ENCODE measurements at regions of chr19 and their contacts with region 1.

Region 1: GRCh38 chr19:18281082-18282020 is at the start of gene JUND:
- DNase-seq: peak; percentile 97
- H3K4me3 Mint-ChIP-seq: peak within 1 kb of the TSS; percentile 86
- H3K27ac Mint-ChIP-seq: peak within 1 kb of the TSS; percentile 98
- H3K4me1 Mint-ChIP-seq: peaks cover 50% of the 10 kb centered on the region
- H3K27me3 Mint-ChIP-seq: no peaks in the 10 kb centered on the region
- total RNA-seq, gene JUND: 343 to 347 TPM

Region 2: GRCh38 chr19:18251587-18252369 is 29.6 kb before region 1 on chr19:
- CTCF ChIA-PET with region 1: interaction called, 10 read pairs
- POLR2A ChIA-PET with region 1: no interaction called
- DNase-seq: peak; percentile 80
- H3K4me3 Mint-ChIP-seq: no peak overlapping the region
- H3K27ac Mint-ChIP-seq: no peak overlapping the region
- H3K4me1 Mint-ChIP-seq: peaks cover 2% of the 10 kb centered on the region
- H3K27me3 Mint-ChIP-seq: peaks cover 24% of the 10 kb centered on the region

Region 3: DNA sequence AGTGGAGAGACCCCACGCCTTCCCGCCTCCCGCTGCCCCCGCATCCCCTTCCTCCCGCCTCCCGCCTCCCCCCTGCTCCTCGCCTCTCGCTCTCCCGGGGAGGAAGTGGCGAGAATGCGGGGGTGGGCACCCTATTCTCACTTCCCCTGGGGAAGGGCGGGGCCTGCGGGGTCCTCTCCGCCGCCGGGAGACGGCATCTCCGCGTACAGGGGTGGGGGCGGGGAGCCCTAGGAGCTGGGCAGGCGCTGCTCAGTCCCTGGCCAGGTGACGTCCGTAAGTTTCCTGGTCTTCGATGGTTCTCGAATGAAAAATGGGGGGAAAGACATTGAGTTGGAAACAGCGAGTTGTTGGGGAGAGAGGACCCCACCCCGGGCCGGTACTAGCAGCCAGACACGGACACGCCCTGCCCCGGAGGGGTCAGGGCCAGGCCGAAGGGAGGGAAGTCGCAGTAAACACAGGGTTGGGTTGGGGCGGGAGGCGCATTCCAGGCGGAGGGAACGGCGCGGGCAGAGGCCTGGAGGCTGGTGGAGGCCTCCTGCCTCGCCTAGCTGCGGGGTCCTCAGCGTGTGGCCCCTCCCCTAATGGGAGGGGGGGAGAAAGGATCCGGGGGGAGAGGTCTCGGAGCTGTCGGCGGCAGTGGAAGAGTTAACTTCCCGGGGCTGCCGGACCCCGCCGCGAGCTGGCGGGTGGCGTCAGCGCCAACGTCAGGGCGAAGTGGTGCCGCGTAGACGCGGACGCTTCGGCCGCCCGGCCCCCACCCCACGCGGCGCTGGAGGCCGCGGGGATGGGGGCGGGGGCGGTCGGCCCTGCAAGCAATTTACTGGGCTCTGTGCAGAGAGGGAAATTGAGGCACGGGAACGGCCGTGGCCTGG is 10.5 kb after region 1 on chr19:
- CTCF ChIA-PET with region 1: interaction called, 69 read pairs
- POLR2A ChIA-PET with region 1: interaction called, 92 read pairs
- DNase-seq: peak; percentile 84
- H3K4me3 Mint-ChIP-seq: peak overlapping the region; percentile 93
- H3K27ac Mint-ChIP-seq: peak overlapping the region; percentile 96
- H3K4me1 Mint-ChIP-seq: peaks cover 76% of the 10 kb centered on the region
- H3K27me3 Mint-ChIP-seq: no peaks in the 10 kb centered on the region

Region 4: DNA sequence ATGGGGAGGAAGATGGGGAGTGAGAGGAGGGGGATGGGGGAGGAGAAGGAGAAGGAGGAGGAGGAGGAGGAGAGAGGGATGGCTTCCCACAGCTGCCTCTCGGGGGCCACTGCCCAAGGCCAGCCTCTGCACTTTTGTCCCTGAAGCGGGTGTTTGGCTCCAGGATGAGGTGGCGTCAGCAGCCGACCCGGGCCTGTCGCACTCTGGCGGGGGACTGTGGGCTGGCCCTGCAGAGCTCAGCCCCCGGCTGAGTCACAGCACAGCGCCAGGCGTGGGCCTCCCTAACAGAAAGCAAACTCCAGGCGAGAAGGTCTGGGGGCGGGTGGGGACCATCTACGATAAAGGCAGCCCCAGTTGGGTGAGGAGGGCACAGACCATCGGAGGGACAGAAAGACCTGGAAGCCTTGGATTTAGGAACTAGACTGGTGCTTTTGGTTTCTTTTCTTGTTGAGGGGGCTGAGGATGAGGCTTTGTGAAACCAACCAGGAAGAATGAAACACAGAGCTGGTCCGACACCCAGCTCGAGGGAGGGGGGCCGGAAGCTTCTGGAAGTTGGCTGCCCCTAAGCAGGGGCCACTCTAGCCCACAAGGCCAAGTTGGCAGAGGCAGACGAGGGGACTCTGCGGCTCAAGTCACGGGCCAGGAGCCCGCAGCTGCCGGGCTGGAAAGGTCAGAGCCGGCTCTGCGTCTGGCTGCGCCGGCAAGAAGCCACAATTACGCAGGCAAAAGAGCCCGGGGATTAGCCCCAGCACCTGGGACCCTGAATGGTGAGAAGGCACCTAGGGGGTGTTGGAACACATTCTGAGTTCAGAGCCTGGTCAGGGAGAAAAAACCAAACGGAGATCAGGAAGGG is 23.3 kb after region 1 on chr19:
- CTCF ChIA-PET with region 1: interaction called, 229 read pairs
- POLR2A ChIA-PET with region 1: interaction called, 128 read pairs
- DNase-seq: peak; percentile 81
- H3K4me3 Mint-ChIP-seq: peak overlapping the region; percentile 98
- H3K27ac Mint-ChIP-seq: peak overlapping the region; percentile 93
- H3K4me1 Mint-ChIP-seq: peaks cover 45% of the 10 kb centered on the region
- H3K27me3 Mint-ChIP-seq: no peaks in the 10 kb centered on the region

Region 5: DNA sequence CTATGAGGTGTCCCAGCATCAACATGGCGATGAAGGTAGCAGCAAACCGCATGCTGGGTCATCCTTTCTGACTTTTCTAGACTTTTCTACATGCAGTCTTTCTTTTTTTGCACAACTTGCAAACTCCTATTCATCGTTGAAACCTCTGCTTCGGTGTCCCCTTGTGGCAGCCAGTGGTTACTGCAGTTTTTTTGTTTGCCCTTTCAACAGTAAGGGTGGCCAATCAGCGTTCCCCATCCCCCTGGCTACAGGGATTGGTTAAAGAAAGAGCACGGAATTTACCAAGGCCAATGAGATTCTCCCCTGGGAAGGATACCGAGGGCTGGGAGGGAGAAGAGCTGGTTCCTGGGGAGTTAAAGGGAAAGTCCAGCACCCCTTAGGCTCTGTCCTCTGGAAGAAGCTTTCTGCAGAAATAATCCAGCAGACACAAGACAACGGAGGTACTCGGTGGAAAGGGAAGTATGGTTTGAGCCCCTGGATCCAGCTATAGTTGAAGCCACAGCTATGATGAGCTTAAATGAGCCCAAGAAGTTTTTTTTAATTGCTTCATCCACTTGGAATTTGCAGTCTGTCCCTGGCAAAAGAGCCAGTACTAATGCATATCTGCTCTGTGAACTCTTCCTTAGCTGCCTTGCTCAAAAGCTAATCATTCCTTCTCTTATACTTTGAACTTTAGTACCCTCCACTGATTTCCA is 47.1 kb after region 1 on chr19:
- CTCF ChIA-PET with region 1: interaction called, 162 read pairs
- POLR2A ChIA-PET with region 1: interaction called, 28 read pairs
- DNase-seq: peak; percentile 94
- H3K4me3 Mint-ChIP-seq: peak overlapping the region; percentile 33
- H3K27ac Mint-ChIP-seq: peak overlapping the region; percentile 51
- H3K4me1 Mint-ChIP-seq: peaks cover 24% of the 10 kb centered on the region
- H3K27me3 Mint-ChIP-seq: no peaks in the 10 kb centered on the region

Region 6: DNA sequence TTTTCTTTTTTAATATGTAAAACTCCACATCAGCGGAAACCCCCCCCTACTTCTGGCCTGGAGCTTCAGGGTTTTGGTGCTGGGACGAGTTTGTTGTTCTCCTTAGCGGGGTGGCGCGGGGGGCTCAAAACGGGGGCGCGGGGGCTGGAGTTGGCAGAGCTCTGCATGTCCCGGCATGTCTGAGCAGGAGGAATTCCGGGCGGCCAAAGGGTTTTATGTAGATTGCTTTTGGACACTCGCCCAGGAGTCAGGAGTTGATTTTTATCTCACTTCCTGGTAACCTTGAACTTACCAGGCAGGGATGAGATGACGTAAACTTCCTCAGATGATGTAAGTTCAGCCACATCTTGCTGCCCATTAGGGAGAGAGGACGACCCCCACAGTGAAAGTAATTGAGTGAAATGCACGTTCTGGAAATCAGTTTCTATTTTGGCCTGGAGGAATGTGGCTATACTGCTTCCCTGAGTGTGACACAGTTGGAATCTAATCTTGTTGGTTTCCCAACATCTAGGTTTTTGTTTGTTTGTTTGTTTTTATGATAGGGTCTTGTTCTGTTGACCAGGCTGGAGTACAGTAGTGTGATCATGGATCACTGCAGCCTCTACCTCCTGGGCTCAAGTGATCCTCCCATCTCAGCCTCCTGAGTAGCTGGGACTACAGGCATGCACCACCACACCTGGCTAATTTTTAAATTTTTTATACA is 83.6 kb after region 1 on chr19:
- CTCF ChIA-PET with region 1: interaction called, 16 read pairs
- POLR2A ChIA-PET with region 1: no interaction called
- DNase-seq: no peak
- H3K4me3 Mint-ChIP-seq: no peak overlapping the region
- H3K27ac Mint-ChIP-seq: peak overlapping the region; percentile 43
- H3K4me1 Mint-ChIP-seq: peaks cover 20% of the 10 kb centered on the region
- H3K27me3 Mint-ChIP-seq: no peaks in the 10 kb centered on the region

Region 7: DNA sequence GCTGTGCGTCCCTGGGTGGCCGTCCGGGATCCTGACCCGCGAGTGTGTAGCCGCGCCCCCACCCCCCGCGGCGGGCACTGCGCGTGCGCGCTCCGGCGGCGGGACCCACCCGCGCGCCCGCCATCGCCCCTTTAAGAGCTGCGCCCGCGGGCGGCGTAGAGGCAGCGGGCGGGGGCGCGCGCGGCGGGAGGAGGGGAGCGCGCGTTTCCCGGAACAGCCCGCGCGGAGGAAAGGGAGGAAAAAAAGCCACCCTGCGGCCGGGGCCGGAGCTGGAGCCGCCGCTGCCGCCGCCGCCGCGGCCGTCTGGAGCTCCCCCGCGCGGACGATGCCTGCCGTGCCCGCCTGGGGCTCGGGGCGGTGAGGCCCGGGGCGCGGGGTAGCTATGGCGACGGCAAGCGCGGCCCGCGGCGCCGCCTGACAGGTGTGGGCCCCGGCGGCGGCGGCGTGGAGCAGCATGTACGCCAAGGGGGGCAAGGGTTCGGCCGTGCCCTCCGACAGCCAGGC is 137.9 kb after region 1 on chr19 and contains the start of gene SSBP4:
- CTCF ChIA-PET with region 1: interaction called, 21 read pairs
- POLR2A ChIA-PET with region 1: interaction called, 7 read pairs
- DNase-seq: peak; percentile 64
- H3K4me3 Mint-ChIP-seq: peak within 1 kb of the TSS; percentile 89
- H3K27ac Mint-ChIP-seq: peak within 1 kb of the TSS; percentile 85
- H3K4me1 Mint-ChIP-seq: peaks cover 84% of the 10 kb centered on the region
- H3K27me3 Mint-ChIP-seq: peaks cover 28% of the 10 kb centered on the region
- total RNA-seq, gene SSBP4: 112 to 123 TPM

Measured in activated CD4-positive, alpha-beta T cell treated with anti-CD3 and anti-CD28 coated beads, Interleukin-2, amount 10 ng/mL, durations not matched to agents 7 days and 5 days (primary cell).